K562 (cell line): ENCODE measurements at regions of chrX and their contacts with region 1.

Region 1: DNA sequence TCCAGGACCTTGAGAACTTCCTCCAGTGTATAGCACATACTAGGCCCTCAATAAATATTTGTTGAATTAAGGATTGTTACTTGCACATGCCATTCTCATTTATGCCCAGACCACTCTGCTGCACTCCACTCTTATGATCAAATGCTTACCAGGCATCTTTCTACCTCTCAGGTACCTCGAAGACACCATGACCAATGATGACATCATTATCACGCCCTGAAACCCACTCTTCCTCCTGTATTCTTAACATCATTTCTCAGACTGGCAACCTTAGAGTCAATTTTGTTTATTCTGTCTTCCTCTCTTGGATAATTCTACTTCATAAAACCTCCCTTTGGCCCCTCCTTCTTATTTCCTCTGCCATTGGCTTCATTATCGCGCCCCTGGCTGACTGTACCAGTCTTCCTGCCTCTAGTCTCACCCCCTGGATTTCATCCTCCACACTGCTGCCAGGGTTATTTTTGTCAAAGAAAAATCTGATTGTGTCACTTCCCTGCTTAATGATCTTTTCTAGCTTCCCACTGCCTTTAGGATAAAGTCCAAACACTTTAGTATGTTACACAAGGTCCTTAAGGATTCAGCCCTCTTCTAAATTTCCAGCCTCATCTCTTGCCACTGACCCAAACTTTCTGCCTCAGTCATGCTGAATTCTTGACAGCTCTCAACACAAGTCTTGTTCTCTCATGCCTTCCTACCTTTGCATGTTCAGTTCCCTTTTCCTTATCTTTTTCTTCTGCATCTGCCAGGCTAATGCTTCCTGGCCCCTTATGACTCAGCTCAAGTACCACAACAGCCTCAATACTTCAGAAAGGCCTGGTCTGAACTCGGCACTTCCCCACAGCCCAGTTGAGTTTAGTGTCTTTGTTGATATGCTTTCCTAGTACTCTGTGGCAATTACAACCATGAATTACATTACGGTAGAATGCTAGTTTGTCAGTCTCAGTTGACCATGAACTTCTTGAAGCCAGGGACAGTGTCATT is 45.8 kb downstream of the HDAC8 start:
- DNase-seq: peak in 2 of 4 experiments; percentile 27 to 59
- ATAC-seq: peak; percentile 79
- H3K4me3 ChIP-seq: no peak overlapping the region
- H3K27ac ChIP-seq: peak overlapping the region; percentile 55; the same call in 2 of the 3 replicates
- H3K4me1 ChIP-seq: peaks cover 0 to 13% of the 10 kb centered on the region in 2 experiments; a peak in 2 of 5 replicates
- H3K27me3 ChIP-seq: no peaks in the 10 kb centered on the region
- CTCF ChIP-seq: no peak
- EP300 ChIP-seq: peak; percentile 50; the same call in 1 of the 2 replicates
- POLR2A ChIP-seq: no peak
- RAD21 ChIP-seq: 0 out of 4 replicates have a peak, but pooled peaks of 1 of the 2 experiments have one; percentile 9

Region 2: DNA sequence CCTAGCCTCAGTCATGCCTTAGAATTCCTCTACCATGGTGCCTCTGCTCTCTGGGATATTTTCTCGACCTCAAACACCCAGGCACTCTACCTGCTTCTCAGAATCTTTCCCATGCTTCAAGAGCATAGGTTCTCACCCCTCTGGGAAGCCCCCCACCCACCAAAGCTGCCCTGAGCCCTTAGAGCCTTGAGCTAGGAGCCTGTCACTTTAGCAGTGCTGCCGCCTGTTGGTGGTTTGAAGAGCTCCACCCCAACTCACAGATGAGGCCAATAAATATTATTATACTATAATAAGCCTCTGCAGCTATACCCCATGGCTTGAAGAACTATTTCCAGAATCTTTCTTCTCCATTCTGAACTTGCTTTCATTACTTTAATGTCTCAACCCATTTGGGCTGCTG is 504.8 kb before region 1 on chrX:
- CTCF ChIA-PET with region 1: no interaction called
- POLR2A ChIA-PET with region 1: no interaction called
- in situ Hi-C with region 1: no loop called
- intact Hi-C with region 1: no loop called
- DNase-seq: peak; percentile 11 to 48 (median 30)
- ATAC-seq: 0 out of 3 replicates have a peak, but pooled peaks have one; percentile 39
- H3K4me3 ChIP-seq: no peak overlapping the region
- H3K27ac ChIP-seq: no peak overlapping the region
- H3K4me1 ChIP-seq: peaks cover 0 to 9% of the 10 kb centered on the region in 2 experiments; a peak in 3 of 5 replicates
- H3K27me3 ChIP-seq: peaks cover 0 to 4% of the 10 kb centered on the region in 2 experiments; a peak in 2 of 5 replicates
- CTCF ChIP-seq: peak; percentile 51 to 62 (median 57)
- EP300 ChIP-seq: no peak
- POLR2A ChIP-seq: no peak
- RAD21 ChIP-seq: 0 out of 4 replicates have a peak, but pooled peaks of 1 of the 2 experiments have one; percentile 16

Region 3: GRCh38 chrX:72366613-72367454 is 160.0 kb before region 1 on chrX:
- CTCF ChIA-PET with region 1: no interaction called
- POLR2A ChIA-PET with region 1: no interaction called
- in situ Hi-C with region 1: no loop called
- intact Hi-C with region 1: loop called (anchors 10 kb)
- DNase-seq: no peak
- ATAC-seq: no peak
- H3K4me3 ChIP-seq: no peak overlapping the region
- H3K27ac ChIP-seq: peak overlapping the region; percentile 70; the same call in 2 of the 3 replicates
- H3K4me1 ChIP-seq: peaks cover 7 to 23% of the 10 kb centered on the region in 2 experiments; a peak in 3 of 5 replicates
- H3K27me3 ChIP-seq: no peaks in the 10 kb centered on the region
- CTCF ChIP-seq: no peak
- EP300 ChIP-seq: no peak
- POLR2A ChIP-seq: no peak
- RAD21 ChIP-seq: no peak

Region 4: DNA sequence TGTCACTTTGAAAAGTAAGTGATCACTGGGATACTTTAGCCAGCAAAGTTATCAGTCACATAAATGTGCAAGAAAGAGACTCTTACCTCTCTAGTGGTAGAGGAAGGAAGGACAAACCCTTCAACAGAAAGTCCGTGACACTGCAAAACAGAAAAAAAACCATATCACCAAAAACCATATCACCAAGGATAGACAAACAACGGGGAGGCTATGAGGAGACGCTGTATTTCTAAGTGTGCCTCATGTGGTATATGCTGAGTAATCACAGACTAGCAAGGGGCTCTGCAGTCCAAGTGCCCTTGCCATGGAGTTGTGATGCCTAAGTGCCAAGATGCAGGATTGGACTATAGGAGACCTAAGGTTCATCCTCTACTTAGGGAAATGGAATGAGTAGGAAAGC is 57.3 kb after region 1 on chrX:
- CTCF ChIA-PET with region 1: no interaction called
- POLR2A ChIA-PET with region 1: no interaction called
- in situ Hi-C with region 1: no loop called
- intact Hi-C with region 1: no loop called
- DNase-seq: peak in 3 of 4 experiments; percentile 5 to 41 (median 37)
- ATAC-seq: peak; percentile 81
- H3K4me3 ChIP-seq: no peak overlapping the region
- H3K27ac ChIP-seq: peak overlapping the region; percentile 54; the same call in 1 of the 3 replicates
- H3K4me1 ChIP-seq: peaks cover 0 to 3% of the 10 kb centered on the region in 2 experiments; a peak in 1 of 5 replicates
- H3K27me3 ChIP-seq: no peaks in the 10 kb centered on the region
- CTCF ChIP-seq: no peak
- EP300 ChIP-seq: no peak
- POLR2A ChIP-seq: no peak
- RAD21 ChIP-seq: no peak